Endothelial cell of umbilical vein (primary cell): ENCODE measurements at regions of chr9 and their contacts with region 1.

Region 1: GRCh38 chr9:95927271-95928004 is 51.9 kb downstream of the ERCC6L2 start:
- DNase-seq: no peak
- H3K4me3 ChIP-seq: no peak overlapping the region
- H3K27ac ChIP-seq: no peak overlapping the region
- H3K4me1 ChIP-seq: no peaks in the 10 kb centered on the region
- H3K27me3 ChIP-seq: no peaks in the 10 kb centered on the region
- CTCF ChIP-seq: no peak
- POLR2A ChIP-seq: no peak

Region 2: DNA sequence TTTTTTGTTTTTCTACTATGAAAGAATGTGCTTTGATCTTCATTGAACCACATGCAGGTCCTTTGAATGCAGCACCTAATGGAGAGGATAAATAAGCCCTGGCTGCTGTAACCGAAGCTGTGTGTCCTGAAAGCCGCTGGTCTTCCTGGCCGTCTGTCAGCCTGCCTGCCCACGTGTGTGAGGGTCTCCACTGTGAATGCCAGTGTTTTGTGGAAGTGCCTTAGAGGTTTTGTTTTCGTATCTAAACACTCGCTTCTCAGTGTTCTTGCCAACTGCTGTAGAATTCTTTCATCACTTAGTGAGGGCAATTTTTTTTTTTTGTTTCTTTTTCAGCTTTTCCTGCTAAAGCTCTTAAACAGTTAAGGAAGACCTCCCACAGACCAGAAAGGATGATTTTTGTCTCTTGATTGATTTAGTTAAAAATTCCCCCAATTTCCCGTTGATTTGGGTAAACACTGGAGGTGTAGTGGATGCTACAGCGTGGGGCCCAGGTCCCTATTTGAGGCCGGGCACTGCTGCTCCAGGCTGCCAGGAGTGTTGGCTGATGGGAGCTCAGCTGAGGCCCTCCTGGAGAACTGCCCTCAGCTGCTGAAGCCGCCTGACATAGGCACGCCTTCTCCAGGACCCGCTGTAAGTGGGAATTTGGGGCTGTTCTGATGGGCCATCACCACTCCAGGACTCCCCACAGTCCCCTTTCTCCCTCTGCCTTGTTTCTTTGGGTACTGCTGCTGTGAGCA is 381.4 kb before region 1 on chr9:
- CTCF ChIA-PET with region 1: no interaction called
- POLR2A ChIA-PET with region 1: no interaction called
- dilution Hi-C with region 1: no loop called
- intact Hi-C with region 1: no loop called
- DNase-seq: no peak
- H3K4me3 ChIP-seq: no peak overlapping the region
- H3K27ac ChIP-seq: no peak overlapping the region
- H3K4me1 ChIP-seq: no peaks in the 10 kb centered on the region
- H3K27me3 ChIP-seq: peaks cover 1 to 6% of the 10 kb centered on the region in 2 experiments
- CTCF ChIP-seq: no peak
- POLR2A ChIP-seq: no peak

Region 3: DNA sequence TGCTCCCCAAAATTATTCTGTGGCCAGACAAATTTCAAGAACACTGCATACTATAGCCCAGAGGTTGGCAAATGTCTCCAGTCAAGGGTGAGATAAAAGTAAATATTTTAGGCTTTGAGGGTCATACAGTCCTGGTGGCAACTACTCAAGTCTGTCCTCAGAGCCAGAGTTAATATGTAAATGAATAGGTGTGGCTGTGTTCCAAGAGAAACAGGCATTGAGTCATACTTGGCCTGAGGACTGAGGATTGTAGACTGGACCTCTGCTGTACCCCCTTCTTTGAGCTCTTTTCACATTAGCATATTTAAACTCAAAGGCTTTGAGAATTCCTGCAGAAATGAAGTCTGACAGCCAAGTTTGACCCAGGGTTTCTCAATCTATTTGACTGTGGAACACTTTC is 281.4 kb before region 1 on chr9:
- CTCF ChIA-PET with region 1: no interaction called
- POLR2A ChIA-PET with region 1: no interaction called
- dilution Hi-C with region 1: no loop called
- intact Hi-C with region 1: no loop called
- DNase-seq: peak; percentile 32
- H3K4me3 ChIP-seq: no peak overlapping the region
- H3K27ac ChIP-seq: no peak overlapping the region
- H3K4me1 ChIP-seq: no peaks in the 10 kb centered on the region
- H3K27me3 ChIP-seq: peaks cover 0 to 4% of the 10 kb centered on the region in 2 experiments
- CTCF ChIP-seq: no peak
- POLR2A ChIP-seq: no peak

Region 4: DNA sequence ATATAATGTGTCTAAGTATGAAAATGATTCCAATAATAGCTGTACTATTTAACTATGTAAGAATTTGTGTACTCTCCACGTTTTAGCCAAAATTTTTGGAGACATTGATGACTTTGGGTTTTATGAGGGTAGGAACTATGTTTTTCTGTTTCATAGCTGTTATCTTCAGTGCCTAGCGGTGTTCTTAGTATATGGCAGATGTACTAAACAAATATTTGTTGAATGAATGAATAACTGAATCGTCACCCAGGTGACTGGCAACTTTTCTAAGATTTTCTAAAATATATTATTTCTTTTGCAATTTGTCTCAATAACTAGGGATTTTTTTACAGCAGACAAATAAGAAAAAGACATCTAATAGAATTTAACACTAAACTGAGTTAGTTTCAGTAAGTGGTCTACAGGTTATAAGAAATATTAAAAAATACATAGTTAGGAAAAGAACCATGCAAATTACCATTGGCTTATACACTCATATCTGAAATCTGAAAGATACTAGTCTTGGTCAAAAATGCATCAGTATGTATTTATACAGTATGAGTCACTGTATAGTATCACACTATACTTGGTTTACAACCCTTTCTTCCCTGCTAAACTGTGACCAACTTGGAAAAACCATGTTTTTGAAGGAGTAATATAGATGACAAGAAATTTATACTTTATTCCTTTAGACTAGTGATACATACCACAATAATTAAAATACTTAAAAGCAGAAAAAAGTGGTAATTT is 62.4 kb before region 1 on chr9:
- CTCF ChIA-PET with region 1: no interaction called
- POLR2A ChIA-PET with region 1: no interaction called
- dilution Hi-C with region 1: no loop called
- intact Hi-C with region 1: no loop called
- DNase-seq: no peak
- H3K4me3 ChIP-seq: no peak overlapping the region
- H3K27ac ChIP-seq: no peak overlapping the region
- H3K4me1 ChIP-seq: no peaks in the 10 kb centered on the region
- H3K27me3 ChIP-seq: no peaks in the 10 kb centered on the region
- CTCF ChIP-seq: no peak
- POLR2A ChIP-seq: no peak

Region 5: GRCh38 chr9:95938724-95939123 is 11.3 kb after region 1 on chr9:
- CTCF ChIA-PET with region 1: interaction called, 10 read pairs
- POLR2A ChIA-PET with region 1: no interaction called
- dilution Hi-C with region 1: no loop called
- intact Hi-C with region 1: no loop called
- DNase-seq: no peak
- H3K4me3 ChIP-seq: no peak overlapping the region
- H3K27ac ChIP-seq: no peak overlapping the region
- H3K4me1 ChIP-seq: no peaks in the 10 kb centered on the region
- H3K27me3 ChIP-seq: no peaks in the 10 kb centered on the region
- CTCF ChIP-seq: no peak
- POLR2A ChIP-seq: no peak